Endothelial cell of umbilical vein (primary cell): ENCODE measurements at regions of chr2 and their contacts with region 1.

Region 1: DNA sequence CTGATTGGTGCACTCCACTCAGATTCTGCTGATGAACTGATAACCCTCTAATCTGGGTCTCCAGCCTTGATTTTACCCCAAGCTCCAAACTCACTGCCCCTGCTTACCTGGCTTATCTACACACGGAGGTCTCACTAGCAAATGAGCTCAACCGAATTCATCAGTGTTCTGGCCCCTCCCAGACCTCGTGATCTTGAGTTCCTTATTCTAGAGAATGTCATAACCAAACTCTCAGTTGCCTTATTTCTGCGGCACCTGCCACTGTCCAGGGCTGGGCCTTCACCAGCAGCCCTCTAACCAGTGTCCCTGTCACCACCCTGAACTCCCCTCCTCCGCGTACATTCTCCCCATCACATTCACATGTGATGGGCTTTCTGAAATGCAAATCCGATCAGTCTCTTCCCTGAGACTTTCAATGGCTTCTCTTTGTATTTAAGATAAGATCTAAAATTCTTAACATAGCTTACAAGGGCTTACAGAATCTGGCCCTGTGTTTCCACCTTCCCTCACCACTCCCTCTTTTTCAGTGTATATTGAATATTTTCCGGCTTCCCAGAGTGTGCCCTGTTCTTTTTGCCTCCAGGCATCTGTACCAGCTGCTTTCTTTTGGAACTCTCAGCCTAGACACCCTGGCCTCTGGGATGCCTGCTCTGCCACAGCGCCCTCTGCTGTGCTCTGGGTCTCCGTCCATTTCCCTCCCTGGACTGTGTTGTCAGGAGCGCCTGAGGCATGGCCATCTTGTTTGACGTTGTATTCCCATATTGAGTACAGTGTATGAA is 31.1 kb downstream of the NAB1 start:
- DNase-seq: no peak
- H3K4me3 ChIP-seq: no peak overlapping the region
- H3K27ac ChIP-seq: no peak overlapping the region
- H3K4me1 ChIP-seq: peaks cover 53% of the 10 kb centered on the region
- H3K27me3 ChIP-seq: no peaks in the 10 kb centered on the region
- CTCF ChIP-seq: peak; percentile 11 to 21
- POLR2A ChIP-seq: no peak

Region 2: GRCh38 chr2:190534310-190535120 is 145.5 kb before region 1 on chr2 and contains the start of gene NEMP2:
- CTCF ChIA-PET with region 1: no interaction called
- POLR2A ChIA-PET with region 1: no interaction called
- dilution Hi-C with region 1: no loop called
- intact Hi-C with region 1: loop called (anchors 1 kb)
- DNase-seq: peak; percentile 61
- H3K4me3 ChIP-seq: peak within 1 kb of the TSS; percentile 63 to 85 (median 66)
- H3K27ac ChIP-seq: peak within 1 kb of the TSS; percentile 3
- H3K4me1 ChIP-seq: peaks cover 9% of the 10 kb centered on the region
- H3K27me3 ChIP-seq: no peaks in the 10 kb centered on the region
- CTCF ChIP-seq: no peak
- POLR2A ChIP-seq: peak; percentile 59
- total RNA-seq, gene NEMP2: 3.8 and 8.4 TPM in 2 replicates

Region 3: GRCh38 chr2:190545555-190546385 is 134.2 kb before region 1 on chr2:
- CTCF ChIA-PET with region 1: no interaction called
- POLR2A ChIA-PET with region 1: no interaction called
- dilution Hi-C with region 1: no loop called
- intact Hi-C with region 1: no loop called
- DNase-seq: no peak
- H3K4me3 ChIP-seq: peak overlapping the region in 1 of 3 experiments; percentile 11
- H3K27ac ChIP-seq: no peak overlapping the region
- H3K4me1 ChIP-seq: no peaks in the 10 kb centered on the region
- H3K27me3 ChIP-seq: no peaks in the 10 kb centered on the region
- CTCF ChIP-seq: no peak
- POLR2A ChIP-seq: no peak

Region 4: GRCh38 chr2:190648289-190649034 is 31.5 kb before region 1 on chr2:
- CTCF ChIA-PET with region 1: interaction called, 4 read pairs
- POLR2A ChIA-PET with region 1: interaction called, 4 read pairs
- dilution Hi-C with region 1: no loop called
- intact Hi-C with region 1: loop called (anchors 1 kb)
- DNase-seq: peak; percentile 83
- H3K4me3 ChIP-seq: peak overlapping the region; percentile 72 to 92 (median 77)
- H3K27ac ChIP-seq: peak overlapping the region; percentile 52
- H3K4me1 ChIP-seq: peaks cover 23% of the 10 kb centered on the region
- H3K27me3 ChIP-seq: no peaks in the 10 kb centered on the region
- CTCF ChIP-seq: no peak
- POLR2A ChIP-seq: peak; percentile 38

Region 5: DNA sequence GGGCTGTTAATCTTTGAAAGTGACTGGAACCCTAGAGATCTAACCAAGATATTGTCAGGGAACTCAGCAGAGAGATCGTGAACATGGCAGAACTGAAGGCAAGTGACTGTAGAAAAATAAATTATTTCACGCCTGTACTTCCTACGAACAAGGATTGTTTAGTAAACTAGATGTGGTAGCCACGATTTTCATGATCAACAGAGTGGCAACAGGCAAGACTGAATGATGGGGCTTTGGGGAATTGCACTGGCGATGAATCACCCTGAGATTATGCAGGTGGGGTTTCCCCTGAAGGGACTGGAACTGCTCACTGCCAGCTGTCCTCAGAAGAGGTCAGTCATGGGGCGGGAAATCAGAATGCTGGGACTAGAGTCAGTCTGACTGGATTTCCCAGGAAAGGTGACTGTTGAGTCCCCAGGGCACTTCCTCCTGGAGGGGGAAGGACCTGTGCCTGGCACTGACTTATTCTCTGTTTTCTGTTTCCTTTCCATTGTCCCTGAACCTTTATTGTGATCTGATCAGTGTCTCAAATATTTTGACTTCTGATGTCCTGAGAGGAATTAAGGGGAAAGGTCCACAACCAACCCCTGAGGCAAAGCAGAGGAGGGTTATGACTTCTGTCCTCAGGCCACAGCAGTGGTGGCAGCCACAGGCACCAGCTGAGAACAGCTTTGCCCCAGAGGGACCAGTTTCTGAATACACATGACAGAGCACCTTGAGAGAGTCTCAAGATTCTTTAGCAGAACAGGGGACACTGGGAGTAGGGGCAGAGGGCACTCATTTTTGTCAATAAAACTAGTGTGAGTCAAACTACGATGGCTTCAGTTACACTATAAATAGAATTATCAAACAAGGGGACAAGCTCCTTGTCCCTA is 38.9 kb after region 1 on chr2:
- CTCF ChIA-PET with region 1: no interaction called
- POLR2A ChIA-PET with region 1: no interaction called
- dilution Hi-C with region 1: no loop called
- intact Hi-C with region 1: loop called (anchors 1 kb)
- DNase-seq: peak; percentile 85
- H3K4me3 ChIP-seq: no peak overlapping the region
- H3K27ac ChIP-seq: peak overlapping the region; percentile 89
- H3K4me1 ChIP-seq: peaks cover 42% of the 10 kb centered on the region
- H3K27me3 ChIP-seq: no peaks in the 10 kb centered on the region
- CTCF ChIP-seq: no peak
- POLR2A ChIP-seq: no peak

Region 6: GRCh38 chr2:190880378-190881073 is 200.5 kb after region 1 on chr2 and contains the start of gene GLS:
- CTCF ChIA-PET with region 1: no interaction called
- POLR2A ChIA-PET with region 1: no interaction called
- dilution Hi-C with region 1: no loop called
- intact Hi-C with region 1: loop called (anchors 10 kb)
- DNase-seq: peak; percentile 98
- H3K4me3 ChIP-seq: peak within 1 kb of the TSS; percentile 80 to 99 (median 98)
- H3K27ac ChIP-seq: peak within 1 kb of the TSS; percentile 83
- H3K4me1 ChIP-seq: peaks cover 32% of the 10 kb centered on the region
- H3K27me3 ChIP-seq: no peaks in the 10 kb centered on the region
- CTCF ChIP-seq: no peak
- POLR2A ChIP-seq: peak; percentile 99
- total RNA-seq, gene GLS: 181 and 183 TPM in 2 replicates